ENCODE measurements at regions of chr3 and their contacts with region 1.

Region 1: DNA sequence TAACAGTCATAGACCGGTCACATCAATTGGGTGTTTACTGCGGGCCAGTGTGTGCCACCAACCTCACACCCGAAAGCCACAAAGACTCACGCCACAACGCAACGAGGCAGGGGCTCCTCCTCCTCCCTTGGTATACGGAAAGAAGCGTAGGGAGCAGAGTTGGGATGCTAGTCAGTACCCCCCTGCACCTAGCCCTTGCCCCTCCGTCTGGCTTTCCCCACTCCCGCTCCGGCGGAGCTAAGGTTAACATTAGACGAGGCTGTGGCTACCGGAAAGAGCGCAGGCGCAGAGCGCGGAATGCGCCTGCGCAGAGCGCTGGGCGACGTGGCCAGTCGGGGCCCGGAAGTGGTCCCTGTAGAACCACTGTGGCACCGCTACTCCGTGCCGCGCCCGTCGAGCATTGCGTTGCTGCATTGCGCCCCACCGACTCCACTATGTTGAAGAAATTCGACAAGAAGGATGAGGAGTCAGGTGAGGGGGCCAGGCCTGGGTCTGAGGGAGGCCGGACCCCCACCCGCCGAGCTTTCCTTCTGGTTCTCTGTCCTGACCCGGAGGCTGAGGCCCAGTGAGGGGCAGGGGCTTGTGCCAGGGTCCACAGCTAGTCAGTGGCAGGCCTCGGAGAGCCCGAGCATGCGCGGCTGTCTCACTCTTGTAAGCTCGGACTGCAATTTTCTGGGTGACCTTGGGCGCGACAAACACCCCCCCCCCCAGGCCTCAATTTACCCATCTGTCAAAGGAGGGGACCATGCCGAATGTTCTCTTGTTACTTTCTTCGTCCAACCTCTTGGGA is at the start of gene COPG1:
- DNase-seq: peak; percentile 87
- ATAC-seq: peak; percentile 87
- H3K4me3 Mint-ChIP-seq: peak within 1 kb of the TSS; percentile 92
- H3K27ac Mint-ChIP-seq: peak within 1 kb of the TSS; percentile 89
- H3K4me1 Mint-ChIP-seq: peaks cover 26% of the 10 kb centered on the region
- H3K27me3 Mint-ChIP-seq: no peaks in the 10 kb centered on the region
- CTCF ChIP-seq: no peak
- total RNA-seq, gene COPG1: 92.2 and 101 TPM in 2 replicates

Region 2: DNA sequence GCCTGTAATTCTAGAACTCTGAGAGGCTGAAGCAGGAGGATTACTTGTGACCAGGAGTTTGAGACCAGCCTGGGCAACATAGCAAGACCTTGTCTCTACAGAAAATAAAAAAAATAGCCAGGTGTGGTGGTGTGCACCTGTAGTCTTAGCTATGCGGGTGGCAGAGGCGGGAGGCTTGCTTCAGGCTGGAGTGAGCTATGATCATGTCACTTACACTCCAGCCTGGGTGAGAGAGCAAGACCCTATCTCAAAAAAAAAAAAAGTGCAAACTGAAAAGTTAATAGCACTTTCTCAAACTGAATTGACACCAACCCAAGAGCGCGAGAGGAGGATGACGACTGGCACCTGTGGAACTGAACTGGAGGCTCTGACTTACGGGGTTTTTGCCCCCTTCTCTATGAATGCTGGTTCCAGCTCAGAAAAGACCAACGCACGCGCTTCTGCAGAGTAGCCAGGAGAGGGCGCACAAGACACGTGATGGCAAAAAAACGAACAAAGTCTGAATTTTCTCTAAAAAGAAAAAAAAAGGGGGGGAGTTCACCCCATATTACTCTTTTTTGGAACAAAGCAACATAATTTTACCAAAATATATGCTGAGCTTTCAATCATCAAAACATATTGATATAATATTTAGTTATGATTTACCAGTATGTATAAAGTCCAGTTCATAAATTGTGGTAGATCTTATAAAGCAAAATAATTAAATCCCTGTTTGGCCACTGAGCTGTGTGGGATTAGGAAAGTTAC is 279.3 kb before region 1 on chr3:
- CTCF ChIA-PET with region 1: interaction called, 98 read pairs
- POLR2A ChIA-PET with region 1: interaction called, 3 read pairs
- intact Hi-C with region 1: loop called (anchors 1 kb)
- DNase-seq: peak; percentile 28
- ATAC-seq: peak; percentile 50
- H3K4me3 Mint-ChIP-seq: no peak overlapping the region
- H3K27ac Mint-ChIP-seq: no peak overlapping the region
- H3K4me1 Mint-ChIP-seq: peaks cover 15% of the 10 kb centered on the region
- H3K27me3 Mint-ChIP-seq: no peaks in the 10 kb centered on the region
- CTCF ChIP-seq: peak; percentile 70

Region 3: GRCh38 chr3:129052675-129053074 is 196.8 kb before region 1 on chr3:
- CTCF ChIA-PET with region 1: interaction called, 135 read pairs
- POLR2A ChIA-PET with region 1: interaction called, 33 read pairs
- intact Hi-C with region 1: loop called (anchors 1 kb)
- DNase-seq: no peak
- ATAC-seq: no peak
- H3K4me3 Mint-ChIP-seq: no peak overlapping the region
- H3K27ac Mint-ChIP-seq: no peak overlapping the region
- H3K4me1 Mint-ChIP-seq: peaks cover 6% of the 10 kb centered on the region
- H3K27me3 Mint-ChIP-seq: peaks cover 23% of the 10 kb centered on the region
- CTCF ChIP-seq: no peak

Region 4: DNA sequence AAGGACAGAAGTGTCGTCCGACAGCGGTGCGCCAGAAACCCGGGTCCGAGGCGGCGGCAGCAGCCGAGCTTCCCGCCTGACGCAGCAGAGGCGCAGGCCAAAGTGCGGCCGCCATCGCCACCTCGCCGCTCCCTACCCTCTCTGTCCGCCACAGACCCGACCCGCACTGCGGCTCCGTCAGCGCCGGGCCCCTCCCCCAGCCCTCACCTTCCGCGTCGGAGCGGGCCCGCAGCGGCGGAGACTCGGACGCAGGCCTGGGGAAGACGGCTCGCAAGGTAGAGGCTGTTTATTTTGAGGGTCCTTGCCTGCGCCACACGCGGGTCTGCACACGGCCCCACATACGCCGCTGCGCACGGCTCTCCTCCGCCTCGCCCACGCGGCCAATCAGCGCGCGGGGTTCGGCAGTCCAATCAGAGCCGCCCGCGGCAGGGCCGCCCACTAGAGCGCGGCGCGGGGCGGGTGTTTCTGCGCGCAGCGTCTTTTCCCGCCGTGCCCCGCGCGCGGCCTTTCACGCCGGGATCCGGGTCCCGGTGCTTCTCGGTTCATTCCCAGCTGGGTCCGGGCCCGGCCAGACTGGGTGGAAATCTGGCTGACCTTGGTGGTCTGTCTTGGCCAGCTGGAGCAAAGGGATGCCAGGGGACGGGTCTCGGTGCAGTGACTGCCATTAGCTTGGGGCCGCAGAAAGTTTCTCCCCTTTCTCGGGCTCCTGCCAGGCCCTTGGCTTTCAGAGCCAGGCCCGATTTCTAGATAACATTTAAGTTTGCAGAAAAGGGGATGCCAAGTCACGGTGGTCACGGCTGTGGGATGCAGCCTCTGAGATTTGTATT is 65.7 kb before region 1 on chr3 and contains the start of gene CNBP:
- CTCF ChIA-PET with region 1: interaction called, 14 read pairs
- POLR2A ChIA-PET with region 1: interaction called, 18 read pairs
- intact Hi-C with region 1: loop called (anchors 1 kb)
- DNase-seq: peak; percentile 92
- ATAC-seq: peak; percentile 95
- H3K4me3 Mint-ChIP-seq: peak within 1 kb of the TSS; percentile 95
- H3K27ac Mint-ChIP-seq: peak within 1 kb of the TSS; percentile 95
- H3K4me1 Mint-ChIP-seq: peaks cover 50% of the 10 kb centered on the region
- H3K27me3 Mint-ChIP-seq: no peaks in the 10 kb centered on the region
- CTCF ChIP-seq: no peak
- total RNA-seq, gene CNBP: 281 and 303 TPM in 2 replicates

Region 5: GRCh38 chr3:129278439-129278970 is 29.0 kb after region 1 on chr3 and contains the start of gene HMCES:
- CTCF ChIA-PET with region 1: interaction called, 3 read pairs
- POLR2A ChIA-PET with region 1: interaction called, 14 read pairs
- intact Hi-C with region 1: loop called (anchors 1 kb)
- DNase-seq: peak; percentile 91
- ATAC-seq: peak; percentile 62
- H3K4me3 Mint-ChIP-seq: peak within 1 kb of the TSS; percentile 91
- H3K27ac Mint-ChIP-seq: peak within 1 kb of the TSS; percentile 86
- H3K4me1 Mint-ChIP-seq: peaks cover 80% of the 10 kb centered on the region
- H3K27me3 Mint-ChIP-seq: no peaks in the 10 kb centered on the region
- CTCF ChIP-seq: no peak
- total RNA-seq, gene HMCES: 31.7 and 37.2 TPM in 2 replicates